Heart right ventricle (tissue), 16 donors: ENCODE measurements at regions of chr3 and their contacts with region 1.

Region 1: GRCh38 chr3:156987946-156988345 is 161.8 kb downstream of the LEKR1 start:
- DNase-seq: no peak
- ATAC-seq: no peak
- H3K4me3 ChIP-seq: no peak overlapping the region
- H3K27ac ChIP-seq: no peak overlapping the region
- H3K4me1 ChIP-seq: no peaks in the 10 kb centered on the region
- H3K27me3 ChIP-seq: no peaks in the 10 kb centered on the region
- CTCF ChIP-seq: no peak

Region 2: DNA sequence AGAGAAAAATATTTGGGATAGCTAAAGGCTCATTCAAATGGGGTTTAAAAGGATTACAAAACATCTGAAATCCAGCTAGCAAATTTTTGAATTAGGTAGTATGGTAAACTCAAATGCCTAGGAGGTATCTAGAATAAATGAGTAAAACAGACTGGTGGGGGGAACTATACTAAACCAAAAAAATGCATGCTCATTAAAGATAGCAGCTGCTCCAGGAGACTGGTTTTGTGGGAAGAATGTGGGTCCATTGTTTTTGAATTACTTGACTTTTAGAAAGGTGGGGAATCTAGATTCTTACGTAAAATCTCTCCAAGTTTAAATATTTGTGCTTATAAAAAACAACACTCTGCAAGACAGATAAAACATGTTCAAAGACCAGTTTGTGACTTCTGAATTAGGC is 88.0 kb before region 1 on chr3:
- intact Hi-C with region 1: no loop called
- DNase-seq: no peak
- ATAC-seq: no peak
- H3K4me3 ChIP-seq: no peak overlapping the region
- H3K27ac ChIP-seq: no peak overlapping the region
- H3K4me1 ChIP-seq: no peaks in the 10 kb centered on the region
- H3K27me3 ChIP-seq: no peaks in the 10 kb centered on the region
- CTCF ChIP-seq: no peak

Region 3: DNA sequence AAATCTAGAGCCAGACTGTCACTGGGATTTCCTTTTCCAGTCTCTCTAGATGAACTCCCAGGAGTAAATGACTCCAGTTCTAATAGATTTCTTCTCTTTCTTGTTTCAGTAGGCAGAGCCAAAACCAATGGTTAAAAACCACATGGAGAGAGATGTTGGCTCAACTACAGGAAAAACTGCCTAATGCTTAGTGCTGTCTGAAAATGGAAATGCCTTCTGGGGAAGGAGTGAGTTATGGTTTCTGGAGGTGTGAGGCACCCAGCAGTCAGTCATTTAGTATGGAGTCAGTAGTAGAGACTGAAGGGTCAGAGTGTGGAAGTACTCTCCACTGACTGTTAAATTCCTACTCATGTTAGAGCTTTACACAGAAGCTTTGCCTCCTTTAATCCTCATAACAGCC is 35.3 kb after region 1 on chr3:
- intact Hi-C with region 1: loop called in 1 of 10 experiments (anchors 1 kb)
- DNase-seq: no peak
- ATAC-seq: no peak
- H3K4me3 ChIP-seq: no peak overlapping the region
- H3K27ac ChIP-seq: no peak overlapping the region
- H3K4me1 ChIP-seq: no peaks in the 10 kb centered on the region
- H3K27me3 ChIP-seq: peaks cover 0 to 3% (median 0%) of the 10 kb centered on the region in 7 donors
- CTCF ChIP-seq: no peak

Region 4: DNA sequence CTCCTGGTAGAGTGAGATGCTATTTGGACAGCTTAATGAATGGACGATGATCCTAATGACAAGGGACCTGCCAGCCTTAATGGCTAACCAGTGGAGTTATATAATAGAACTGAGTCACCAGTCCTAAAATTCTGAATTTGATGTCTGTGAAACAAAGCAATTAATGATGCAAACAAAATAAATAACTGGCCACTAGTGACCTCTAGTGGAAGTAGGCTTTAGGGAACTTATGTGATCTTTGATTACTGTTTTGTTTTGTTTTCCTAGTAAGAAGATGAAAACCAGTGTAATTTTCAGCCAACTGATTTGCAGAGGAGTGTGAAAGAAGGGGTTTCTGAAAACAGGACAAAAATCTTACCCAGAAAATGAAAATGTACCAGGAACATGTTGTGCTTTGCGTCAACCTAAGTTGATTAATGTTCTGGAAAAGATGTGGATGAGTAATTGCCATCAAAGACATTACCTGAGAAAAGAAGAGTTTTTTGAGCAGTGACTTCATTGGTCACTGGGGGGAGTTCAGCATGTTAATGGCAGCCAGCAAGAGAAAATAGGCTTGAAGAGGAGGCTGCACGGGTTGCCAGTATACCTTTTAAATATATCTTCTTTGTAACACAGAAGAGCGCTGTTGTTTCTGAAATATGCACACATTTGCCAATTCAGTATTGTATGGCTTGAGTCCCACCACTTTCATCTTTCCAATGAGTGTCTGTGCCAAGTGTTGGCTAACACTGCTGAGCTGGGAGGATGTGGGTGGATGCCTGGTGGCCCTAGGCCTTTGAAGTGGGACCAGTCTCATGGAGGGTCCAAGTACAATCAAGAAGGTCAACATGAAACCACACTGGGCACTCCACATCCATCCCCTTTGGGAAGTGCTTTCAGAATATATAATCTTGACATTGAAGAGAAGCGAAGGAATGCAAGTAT is 505.9 kb after region 1 on chr3:
- intact Hi-C with region 1: no loop called
- DNase-seq: no peak
- ATAC-seq: peak in 1 of 8 donors; percentile 55
- H3K4me3 ChIP-seq: no peak overlapping the region
- H3K27ac ChIP-seq: no peak overlapping the region
- H3K4me1 ChIP-seq: peaks cover 0 to under 1% (median 0%) of the 10 kb centered on the region in 9 donors
- H3K27me3 ChIP-seq: peaks cover 0 to 17% (median 4%) of the 10 kb centered on the region in 7 donors
- CTCF ChIP-seq: peak; percentile 20 to 77 (median 64)